ENCODE measurements at regions of chr11 and their contacts with region 1.

Region 1: GRCh38 chr11:128610721-128611617 is 23.6 kb upstream of the ETS1 start:
- DNase-seq: no peak
- ATAC-seq: peak; percentile 23; the same call in 1 of the 2 replicates
- H3K4me3 ChIP-seq: no peak overlapping the region
- H3K27ac ChIP-seq: no peak overlapping the region
- H3K4me1 ChIP-seq: no peaks in the 10 kb centered on the region
- H3K27me3 ChIP-seq: peaks cover 2% of the 10 kb centered on the region; the same call in 1 of the 2 replicates
- CTCF ChIP-seq: no peak

Region 2: DNA sequence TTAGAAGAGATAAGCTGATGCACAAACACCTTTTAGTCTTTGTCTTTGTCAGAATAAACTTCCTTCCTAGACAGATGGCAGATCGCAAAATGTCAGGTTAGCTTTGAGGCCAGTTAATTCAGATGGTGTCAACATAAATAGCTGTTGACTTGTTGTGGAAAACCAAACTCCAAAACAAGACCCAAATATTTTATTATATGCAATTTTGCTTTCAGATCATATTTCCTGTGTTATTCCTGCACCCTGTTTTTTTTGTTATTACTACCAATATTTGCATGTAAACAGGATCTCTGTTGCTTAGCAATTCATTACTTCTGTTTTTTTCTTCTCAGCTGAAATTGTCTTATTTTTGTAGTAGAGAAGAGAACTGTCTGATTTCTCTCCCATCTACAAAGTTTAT is 339.6 kb before region 1 on chr11:
- CTCF ChIA-PET with region 1: interaction called, 12 read pairs
- POLR2A ChIA-PET with region 1: no interaction called
- in situ Hi-C with region 1: no loop called
- intact Hi-C with region 1: no loop called
- DNase-seq: no peak
- ATAC-seq: no peak
- H3K4me3 ChIP-seq: no peak overlapping the region
- H3K27ac ChIP-seq: no peak overlapping the region
- H3K4me1 ChIP-seq: no peaks in the 10 kb centered on the region
- H3K27me3 ChIP-seq: no peaks in the 10 kb centered on the region
- CTCF ChIP-seq: no peak

Region 3: DNA sequence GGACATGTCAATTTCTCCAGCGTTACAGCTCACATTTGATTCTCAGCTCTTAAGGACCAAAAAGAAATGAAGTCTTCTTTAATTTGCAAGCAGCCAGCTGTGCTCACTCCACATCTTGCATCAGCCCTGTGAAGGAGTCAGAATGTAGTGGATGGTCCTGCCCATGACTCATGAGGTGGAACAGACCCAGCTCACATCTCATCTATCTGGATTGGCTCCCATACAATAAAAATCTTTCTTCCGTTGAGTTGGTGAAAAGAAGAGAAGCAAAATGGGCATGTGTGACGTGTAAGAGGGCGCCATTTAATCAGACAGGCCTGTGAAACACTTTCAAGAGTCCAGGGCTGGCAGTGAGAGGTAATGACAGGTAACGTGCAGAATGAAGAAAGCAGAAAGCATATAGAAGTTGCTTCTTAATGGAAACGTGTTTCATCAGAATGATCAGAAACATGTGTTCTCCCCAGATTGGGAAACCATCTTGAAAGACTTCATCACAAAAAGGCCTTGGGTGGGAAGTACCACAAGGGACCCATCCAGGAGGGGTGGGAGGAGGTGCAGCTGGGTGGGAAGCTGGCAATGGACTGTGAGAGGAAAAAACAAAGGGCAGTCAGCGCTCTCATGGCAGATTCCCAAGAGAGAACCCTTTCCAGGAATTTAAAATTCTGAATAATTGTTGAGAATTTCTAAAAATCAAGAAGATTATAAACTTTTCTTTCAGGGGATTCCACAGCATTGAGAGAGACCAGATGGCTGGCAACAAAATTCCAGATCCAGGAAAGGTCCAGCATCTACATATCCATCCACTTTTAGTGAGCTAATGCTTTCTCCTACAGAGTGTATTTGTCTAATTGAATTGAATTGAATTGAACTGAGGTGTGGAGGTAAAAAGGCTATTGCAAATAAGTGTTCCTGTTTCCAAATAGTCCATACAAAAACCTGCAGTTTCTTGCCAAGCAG is 80.6 kb before region 1 on chr11:
- CTCF ChIA-PET with region 1: no interaction called
- POLR2A ChIA-PET with region 1: no interaction called
- in situ Hi-C with region 1: no loop called
- intact Hi-C with region 1: loop called (anchors 2 kb)
- DNase-seq: no peak
- ATAC-seq: no peak
- H3K4me3 ChIP-seq: no peak overlapping the region
- H3K27ac ChIP-seq: no peak overlapping the region
- H3K4me1 ChIP-seq: no peaks in the 10 kb centered on the region
- H3K27me3 ChIP-seq: no peaks in the 10 kb centered on the region
- CTCF ChIP-seq: no peak

Region 4: DNA sequence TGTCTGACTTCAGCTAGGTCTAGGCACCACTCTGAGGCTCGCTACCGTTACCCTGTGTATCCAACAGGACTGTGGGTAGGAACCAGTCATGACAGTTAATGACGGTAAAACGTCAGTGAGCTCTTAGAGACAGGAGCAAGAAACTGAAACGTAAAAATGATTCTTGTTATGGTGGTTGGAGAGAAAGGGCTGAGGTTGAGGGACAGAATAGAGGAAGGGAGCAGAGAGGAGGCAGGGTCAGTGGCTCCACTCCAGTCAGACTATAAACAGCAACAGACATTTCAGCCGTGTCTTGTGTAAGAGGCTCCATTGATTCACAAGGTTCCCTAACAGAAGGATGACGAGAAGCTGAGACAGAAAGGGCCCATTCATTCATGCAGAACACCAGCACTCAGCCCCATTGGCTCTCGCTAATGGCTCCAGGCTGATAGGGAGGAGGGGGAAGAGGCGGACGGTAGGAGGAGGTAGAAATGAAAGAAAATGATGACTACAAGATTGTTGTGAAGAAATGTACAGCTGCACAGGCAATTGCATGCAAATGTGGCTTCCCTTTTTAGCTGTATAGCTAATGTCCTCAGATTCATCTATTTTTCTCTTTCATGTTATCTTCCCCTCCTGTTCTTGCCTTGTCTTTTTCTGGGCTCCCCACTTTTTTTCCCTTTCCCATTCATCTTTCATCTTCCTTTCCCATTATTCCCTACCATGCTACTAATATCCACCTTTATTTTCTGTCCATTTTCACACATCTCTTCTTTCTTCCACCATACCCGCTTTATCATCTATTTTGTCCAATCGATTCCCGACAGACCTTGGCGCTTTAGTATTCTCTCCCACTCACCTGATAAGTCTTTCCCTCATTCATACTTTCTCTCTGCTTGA is 57.9 kb before region 1 on chr11:
- CTCF ChIA-PET with region 1: no interaction called
- POLR2A ChIA-PET with region 1: interaction called, 13 read pairs
- in situ Hi-C with region 1: no loop called
- intact Hi-C with region 1: no loop called
- DNase-seq: no peak
- ATAC-seq: no peak
- H3K4me3 ChIP-seq: no peak overlapping the region
- H3K27ac ChIP-seq: no peak overlapping the region
- H3K4me1 ChIP-seq: no peaks in the 10 kb centered on the region
- H3K27me3 ChIP-seq: no peaks in the 10 kb centered on the region
- CTCF ChIP-seq: no peak

Region 5: GRCh38 chr11:128757235-128757711 is 146.3 kb after region 1 on chr11:
- CTCF ChIA-PET with region 1: no interaction called
- POLR2A ChIA-PET with region 1: no interaction called
- in situ Hi-C with region 1: no loop called
- intact Hi-C with region 1: no loop called
- DNase-seq: no peak
- ATAC-seq: no peak
- H3K4me3 ChIP-seq: no peak overlapping the region
- H3K27ac ChIP-seq: no peak overlapping the region
- H3K4me1 ChIP-seq: no peaks in the 10 kb centered on the region
- H3K27me3 ChIP-seq: 0 out of 2 replicates have a peak, but pooled peaks cover 3% of the 10 kb centered on the region
- CTCF ChIP-seq: no peak

Region 6: GRCh38 chr11:128802358-128802981 is 191.5 kb after region 1 on chr11:
- CTCF ChIA-PET with region 1: no interaction called
- POLR2A ChIA-PET with region 1: interaction called, 10 read pairs
- in situ Hi-C with region 1: no loop called
- intact Hi-C with region 1: no loop called
- DNase-seq: peak; percentile 2
- ATAC-seq: peak; percentile 82; the same call in 1 of the 2 replicates
- H3K4me3 ChIP-seq: no peak overlapping the region
- H3K27ac ChIP-seq: no peak overlapping the region
- H3K4me1 ChIP-seq: no peaks in the 10 kb centered on the region
- H3K27me3 ChIP-seq: peaks cover 7% of the 10 kb centered on the region; the same call in 1 of the 2 replicates
- CTCF ChIP-seq: peak; percentile 78